ENCODE measurements at regions of chr3 and their contacts with region 1.

Region 1: DNA sequence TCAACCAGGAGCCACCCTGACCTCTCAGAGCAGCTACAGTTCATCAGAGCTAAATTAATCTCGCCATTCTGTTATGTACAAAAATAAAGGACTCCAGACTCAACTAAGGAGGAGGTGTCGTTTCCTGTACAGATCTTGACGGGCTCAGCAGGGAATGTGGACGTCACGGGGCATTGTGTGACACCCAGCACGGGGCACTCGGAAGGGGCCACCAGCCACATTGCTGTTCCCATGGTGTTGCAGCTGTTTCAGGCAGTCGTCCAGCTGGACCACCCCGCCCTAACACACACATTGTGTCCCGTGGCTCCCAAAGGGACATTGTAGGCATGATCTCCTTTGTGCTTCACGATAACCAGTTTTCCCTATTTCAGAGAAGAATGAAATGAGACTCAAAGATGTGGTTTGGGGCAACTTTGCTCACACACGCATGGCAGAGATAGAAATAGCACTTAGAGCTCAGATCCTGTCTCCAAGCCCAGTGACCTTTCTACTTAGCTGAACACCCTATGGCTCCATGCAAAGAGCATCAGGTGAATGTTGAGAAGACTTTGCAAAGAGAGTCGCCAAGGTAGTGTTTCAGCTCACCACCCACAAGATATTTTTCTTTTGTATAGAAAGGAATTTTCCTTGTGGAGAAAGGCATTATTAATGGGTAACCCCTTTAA is 5.5 kb downstream of the SSUH2 start:
- DNase-seq: no peak
- ATAC-seq: no peak
- H3K4me3 ChIP-seq: no peak overlapping the region
- H3K27ac ChIP-seq: no peak overlapping the region
- H3K4me1 ChIP-seq: peaks cover 77% of the 10 kb centered on the region
- H3K27me3 ChIP-seq: no peaks in the 10 kb centered on the region
- CTCF ChIP-seq: no peak
- EP300 ChIP-seq: no peak
- POLR2A ChIP-seq: no peak
- RAD21 ChIP-seq: no peak

Region 2: GRCh38 chr3:8336456-8336855 is 302.7 kb before region 1 on chr3:
- CTCF ChIA-PET with region 1: no interaction called
- POLR2A ChIA-PET with region 1: no interaction called
- in situ Hi-C with region 1: no loop called
- intact Hi-C with region 1: no loop called
- DNase-seq: peak; percentile 3
- ATAC-seq: no peak
- H3K4me3 ChIP-seq: no peak overlapping the region
- H3K27ac ChIP-seq: no peak overlapping the region
- H3K4me1 ChIP-seq: no peaks in the 10 kb centered on the region
- H3K27me3 ChIP-seq: no peaks in the 10 kb centered on the region
- CTCF ChIP-seq: peak; percentile 60
- EP300 ChIP-seq: no peak
- POLR2A ChIP-seq: no peak
- RAD21 ChIP-seq: no peak

Region 3: DNA sequence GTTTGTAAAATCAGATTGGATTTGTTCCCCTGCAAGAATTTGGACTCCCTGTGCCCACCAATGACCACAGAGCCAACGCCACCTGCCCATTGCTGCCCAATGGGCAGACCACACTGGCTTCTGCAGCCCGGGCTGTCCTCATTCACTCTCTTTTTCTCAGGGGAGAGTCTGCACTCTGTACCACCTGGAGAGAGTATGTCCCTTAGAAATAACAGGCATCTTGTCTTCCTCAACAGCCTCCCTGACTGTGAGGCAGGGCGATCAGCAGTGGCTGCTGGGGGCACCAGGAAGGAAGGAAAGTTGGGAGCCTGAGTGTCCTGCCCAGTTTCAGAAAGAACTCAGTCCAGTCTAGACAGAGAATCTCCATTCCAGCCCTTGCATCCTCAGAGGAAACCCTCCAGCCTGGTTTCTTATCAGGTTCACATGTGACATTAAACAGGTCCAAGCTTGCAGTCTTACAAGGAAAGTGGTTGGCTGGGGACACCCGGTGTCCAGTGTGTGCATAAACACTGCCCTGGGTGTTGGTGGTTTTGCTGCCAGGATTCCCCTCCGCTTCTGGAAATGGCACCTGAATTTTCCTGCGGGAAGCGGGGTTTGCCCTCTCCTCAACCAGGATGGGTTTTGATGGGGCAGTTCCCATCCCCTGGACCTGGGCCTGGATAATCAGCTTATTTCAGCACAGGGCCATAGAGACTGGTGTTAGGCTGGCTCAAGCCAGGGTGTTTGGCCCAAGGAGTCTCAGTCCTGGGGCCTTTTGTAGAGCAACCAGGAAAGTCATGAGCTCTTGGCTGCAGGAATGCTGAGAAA is 31.7 kb before region 1 on chr3:
- CTCF ChIA-PET with region 1: no interaction called
- POLR2A ChIA-PET with region 1: no interaction called
- in situ Hi-C with region 1: no loop called
- intact Hi-C with region 1: no loop called
- DNase-seq: peak; percentile 55
- ATAC-seq: peak; percentile 93
- H3K4me3 ChIP-seq: no peak overlapping the region
- H3K27ac ChIP-seq: no peak overlapping the region
- H3K4me1 ChIP-seq: peaks cover 5% of the 10 kb centered on the region; the same call in 1 of the 2 replicates
- H3K27me3 ChIP-seq: no peaks in the 10 kb centered on the region
- CTCF ChIP-seq: peak; percentile 83
- EP300 ChIP-seq: no peak
- POLR2A ChIP-seq: no peak
- RAD21 ChIP-seq: peak; percentile 82

Region 4: DNA sequence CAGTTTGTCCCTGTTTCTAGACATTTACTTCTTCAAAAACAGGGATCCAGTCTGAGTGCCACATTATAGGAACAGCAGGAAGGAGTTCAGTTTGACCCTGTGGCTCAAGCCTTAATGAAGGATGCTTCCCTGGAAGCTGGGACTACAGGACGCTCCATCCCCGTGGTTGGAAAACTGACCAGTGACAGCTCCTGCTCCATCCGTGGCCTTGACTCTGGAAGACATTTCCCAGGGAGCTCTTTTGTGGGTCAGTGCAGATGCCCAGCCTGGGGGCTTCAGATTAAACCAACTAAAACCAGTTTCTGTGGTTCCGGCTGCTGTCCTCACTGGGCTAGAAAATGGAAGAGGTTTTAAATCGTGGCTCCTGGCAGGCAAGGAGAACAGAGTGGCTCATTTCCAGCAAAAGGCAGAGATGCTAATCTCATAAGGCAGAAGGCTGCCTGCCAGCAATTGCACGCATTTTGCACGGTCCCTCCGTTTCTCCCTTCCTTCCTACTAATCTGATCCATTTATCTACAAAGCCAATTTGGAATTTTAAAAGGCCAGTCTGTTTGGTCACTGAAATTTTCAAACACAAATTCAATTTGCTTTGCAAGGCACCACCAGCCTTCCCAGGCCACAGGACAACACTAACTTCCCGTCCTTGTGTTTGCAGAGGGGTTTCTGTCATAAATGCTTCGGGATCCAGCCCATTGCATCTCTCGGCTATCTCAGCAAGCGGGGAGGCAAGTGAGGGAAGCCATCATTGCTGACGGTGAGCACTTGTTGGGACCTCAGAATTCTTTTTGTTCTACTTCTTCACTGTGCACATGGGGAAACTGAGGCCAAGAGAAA is 11.7 kb after region 1 on chr3:
- CTCF ChIA-PET with region 1: no interaction called
- POLR2A ChIA-PET with region 1: interaction called, 11 read pairs
- in situ Hi-C with region 1: no loop called
- intact Hi-C with region 1: no loop called
- DNase-seq: peak; percentile 69
- ATAC-seq: no peak
- H3K4me3 ChIP-seq: peak overlapping the region; percentile 56 to 71 (median 58)
- H3K27ac ChIP-seq: peak overlapping the region; percentile 83
- H3K4me1 ChIP-seq: peaks cover 100% of the 10 kb centered on the region
- H3K27me3 ChIP-seq: no peaks in the 10 kb centered on the region
- CTCF ChIP-seq: no peak
- EP300 ChIP-seq: no peak
- POLR2A ChIP-seq: no peak
- RAD21 ChIP-seq: no peak

Region 5: DNA sequence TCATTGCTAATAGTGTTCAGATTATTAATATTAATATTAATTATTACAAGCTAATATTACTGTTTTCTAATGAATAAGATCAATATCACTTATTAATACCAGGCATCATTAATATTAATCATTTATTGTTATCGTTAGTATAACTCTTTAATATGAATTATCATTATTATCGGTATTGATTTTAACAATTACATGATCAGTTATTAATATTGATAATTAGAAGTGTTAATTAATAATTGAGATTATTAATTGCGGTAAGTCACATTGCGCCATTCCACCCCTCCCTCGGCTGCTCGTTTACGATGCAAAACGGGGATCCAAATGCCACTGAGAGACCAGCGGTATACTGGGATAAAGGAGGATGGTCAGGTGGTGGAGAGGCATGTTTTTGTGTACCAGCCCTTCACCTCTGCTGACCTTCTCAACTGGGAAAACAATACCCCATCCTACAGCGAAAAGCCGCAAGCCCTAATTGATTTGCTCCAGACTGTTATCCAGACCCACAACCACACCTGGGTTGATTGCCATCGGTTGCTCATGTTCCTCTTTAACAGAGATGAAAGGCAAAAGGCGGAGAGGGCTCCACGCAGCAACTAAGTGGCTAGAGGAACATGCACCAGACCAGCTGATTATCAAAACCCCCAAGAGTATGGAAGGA is 34.1 kb after region 1 on chr3:
- CTCF ChIA-PET with region 1: no interaction called
- POLR2A ChIA-PET with region 1: no interaction called
- in situ Hi-C with region 1: no loop called
- intact Hi-C with region 1: loop called (anchors 1 kb)
- DNase-seq: no peak
- ATAC-seq: no peak
- H3K4me3 ChIP-seq: no peak overlapping the region
- H3K27ac ChIP-seq: no peak overlapping the region
- H3K4me1 ChIP-seq: peaks cover 48% of the 10 kb centered on the region
- H3K27me3 ChIP-seq: no peaks in the 10 kb centered on the region
- CTCF ChIP-seq: no peak
- EP300 ChIP-seq: no peak
- POLR2A ChIP-seq: no peak
- RAD21 ChIP-seq: no peak

Measured in HepG2 (cell line).